ENCODE measurements at regions of chrX and their contacts with region 1.

Region 1: DNA sequence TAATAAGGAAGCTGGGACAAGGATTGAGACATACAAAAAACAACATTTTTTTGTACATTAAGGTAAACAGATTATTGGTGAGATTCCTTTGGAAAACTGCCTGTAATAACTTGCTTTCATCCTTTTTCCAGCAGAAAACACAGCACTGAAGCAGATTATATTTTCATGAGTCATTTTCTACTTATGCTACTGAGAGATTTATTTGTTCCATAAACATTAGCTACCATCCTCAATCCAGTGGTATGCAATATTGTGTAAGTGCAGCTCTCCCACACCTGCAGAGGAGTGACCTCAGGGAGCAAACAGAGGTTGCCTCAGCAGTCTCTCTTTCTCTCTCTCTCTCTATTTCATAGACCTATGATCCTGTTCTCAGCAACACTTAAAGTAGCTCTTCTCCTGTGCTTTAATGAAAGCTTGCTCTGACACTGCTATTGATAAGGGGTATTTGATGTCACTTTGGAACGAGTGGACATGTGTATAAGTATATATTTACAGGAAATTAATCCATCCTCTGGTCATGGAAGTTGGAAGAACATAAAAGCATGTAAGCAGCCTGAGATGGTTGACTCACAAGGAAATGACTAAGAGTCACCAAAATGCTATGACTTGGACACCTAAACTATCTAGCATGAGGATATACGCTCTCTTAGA is 163.7 kb upstream of the SPANXC start:
- DNase-seq: peak; percentile 87
- ATAC-seq: peak; percentile 88
- H3K4me3 ChIP-seq: peak overlapping the region; percentile 47; the same call in 1 of the 2 replicates
- H3K27ac ChIP-seq: peak overlapping the region; percentile 98
- H3K4me1 ChIP-seq: peaks cover 38% of the 10 kb centered on the region
- H3K27me3 ChIP-seq: no peaks in the 10 kb centered on the region
- CTCF ChIP-seq: no peak

Region 2: GRCh38 chrX:141176586-141177451 is 229.1 kb before region 1 on chrX and contains the start of gene LDOC1:
- CTCF ChIA-PET with region 1: no interaction called
- POLR2A ChIA-PET with region 1: no interaction called
- intact Hi-C with region 1: loop called (anchors 5 kb)
- DNase-seq: peak; percentile 89
- ATAC-seq: peak; percentile 79
- H3K4me3 ChIP-seq: peak within 1 kb of the TSS; percentile 99
- H3K27ac ChIP-seq: peak within 1 kb of the TSS; percentile 40
- H3K4me1 ChIP-seq: peaks cover 14% of the 10 kb centered on the region; the same call in 1 of the 2 replicates
- H3K27me3 ChIP-seq: no peaks in the 10 kb centered on the region
- CTCF ChIP-seq: no peak
- total RNA-seq, gene LDOC1: 40.6 and 45.5 TPM in 2 replicates

Region 3: DNA sequence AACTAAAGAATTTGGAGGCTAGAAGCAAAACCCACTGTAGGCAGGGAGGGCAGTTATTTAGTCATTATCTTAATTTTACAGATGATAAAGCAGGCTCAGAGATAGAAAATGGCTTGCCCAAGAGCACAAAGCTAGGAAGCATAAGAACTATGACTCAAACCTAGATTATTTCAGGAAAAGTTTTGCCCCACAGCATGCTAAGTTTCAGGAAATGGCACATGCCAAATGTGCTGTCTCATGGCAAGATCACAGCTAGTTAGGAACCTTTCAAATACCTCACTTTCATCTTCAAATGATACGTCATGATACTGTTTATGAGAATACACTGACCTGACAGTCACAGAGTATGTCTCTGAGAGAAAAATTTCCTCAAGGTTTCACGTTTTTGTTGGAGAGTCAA is 85.2 kb before region 1 on chrX:
- CTCF ChIA-PET with region 1: no interaction called
- POLR2A ChIA-PET with region 1: no interaction called
- intact Hi-C with region 1: loop called (anchors 5 kb)
- DNase-seq: peak; percentile 39
- ATAC-seq: no peak
- H3K4me3 ChIP-seq: no peak overlapping the region
- H3K27ac ChIP-seq: no peak overlapping the region; the same call in 1 of the 2 replicates
- H3K4me1 ChIP-seq: peaks cover 14% of the 10 kb centered on the region
- H3K27me3 ChIP-seq: no peaks in the 10 kb centered on the region
- CTCF ChIP-seq: no peak

Region 4: GRCh38 chrX:141642984-141643383 is 237.0 kb after region 1 on chrX:
- CTCF ChIA-PET with region 1: no interaction called
- POLR2A ChIA-PET with region 1: interaction called, 5 read pairs
- intact Hi-C with region 1: loop called (anchors 1 kb)
- DNase-seq: peak; percentile 56
- ATAC-seq: peak; percentile 67
- H3K4me3 ChIP-seq: no peak overlapping the region
- H3K27ac ChIP-seq: no peak overlapping the region
- H3K4me1 ChIP-seq: peaks cover 23% of the 10 kb centered on the region
- H3K27me3 ChIP-seq: no peaks in the 10 kb centered on the region
- CTCF ChIP-seq: no peak